Activated naive CD4-positive, alpha-beta T cell treated with anti-CD3 and anti-CD28 coated beads for 36 hours (primary cell): ENCODE measurements at regions of chr16 and their contacts with region 1.

Region 1: GRCh38 chr16:68264128-68265077 is at the start of gene SLC7A6:
- DNase-seq: peak; percentile 88
- H3K4me3 Mint-ChIP-seq: peak within 1 kb of the TSS; percentile 85
- H3K27ac Mint-ChIP-seq: peak within 1 kb of the TSS; percentile 98
- H3K4me1 Mint-ChIP-seq: peaks cover 46% of the 10 kb centered on the region
- H3K27me3 Mint-ChIP-seq: no peaks in the 10 kb centered on the region
- total RNA-seq, gene SLC7A6: 79.4 to 83.4 TPM

Region 2: GRCh38 chr16:67781565-67781921 is 482.9 kb before region 1 on chr16:
- CTCF ChIA-PET with region 1: no interaction called
- intact Hi-C with region 1: no loop called
- DNase-seq: peak; percentile 54
- H3K4me3 Mint-ChIP-seq: no peak overlapping the region
- H3K27ac Mint-ChIP-seq: peak overlapping the region; percentile 67
- H3K4me1 Mint-ChIP-seq: peaks cover 32% of the 10 kb centered on the region
- H3K27me3 Mint-ChIP-seq: no peaks in the 10 kb centered on the region

Region 3: DNA sequence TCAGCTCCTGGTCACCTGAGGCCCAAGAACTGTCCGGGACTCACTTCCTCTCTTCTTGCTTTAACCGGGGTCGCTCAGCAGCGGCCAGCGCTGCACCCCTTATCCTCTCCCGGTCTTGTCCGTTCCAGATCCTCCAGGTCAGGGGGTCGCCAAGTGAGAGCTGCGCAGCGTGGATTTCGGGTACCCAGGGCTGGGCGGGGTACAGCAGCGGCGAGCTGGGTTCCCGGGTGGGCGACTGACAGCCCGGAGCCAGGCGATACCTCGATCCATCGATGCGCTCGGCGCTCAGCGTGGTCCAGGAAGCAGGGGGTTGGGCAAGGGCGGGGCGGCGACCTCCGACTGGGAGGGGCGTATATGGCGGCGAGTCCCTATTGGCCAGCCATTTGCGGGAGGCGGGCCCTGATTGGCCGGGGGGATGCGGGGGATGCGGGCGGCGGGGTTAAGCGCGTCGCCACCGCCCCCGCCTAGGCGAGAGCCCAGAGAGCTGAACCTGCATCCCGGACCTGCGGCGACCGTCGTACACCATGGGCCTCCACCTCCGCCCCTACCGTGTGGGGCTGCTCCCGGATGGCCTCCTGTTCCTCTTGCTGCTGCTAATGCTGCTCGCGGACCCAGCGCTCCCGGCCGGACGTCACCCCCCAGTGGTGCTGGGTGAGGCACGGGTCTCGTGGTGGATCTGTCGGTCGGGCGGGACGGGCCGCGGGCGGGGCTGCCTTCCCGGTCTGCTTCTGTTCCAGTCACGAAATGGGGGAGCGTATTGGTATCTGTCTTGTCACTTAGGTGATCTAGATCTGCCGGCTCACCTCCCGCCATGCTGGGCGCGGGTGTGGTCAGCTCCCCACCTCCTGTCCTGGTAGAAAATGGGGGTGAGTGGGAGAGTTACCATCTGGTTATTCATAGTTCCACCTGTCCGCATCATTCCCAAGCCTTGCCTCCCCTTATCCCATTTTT is 19.2 kb before region 1 on chr16 and contains the start of gene PLA2G15:
- CTCF ChIA-PET with region 1: interaction called, 39 read pairs
- intact Hi-C with region 1: loop called (anchors 2 kb)
- DNase-seq: peak; percentile 97
- H3K4me3 Mint-ChIP-seq: peak within 1 kb of the TSS; percentile 90
- H3K27ac Mint-ChIP-seq: no peak within 1 kb of the TSS
- H3K4me1 Mint-ChIP-seq: peaks cover 20% of the 10 kb centered on the region
- H3K27me3 Mint-ChIP-seq: no peaks in the 10 kb centered on the region
- total RNA-seq, gene PLA2G15: 4.2 to 5.4 TPM

Region 4: DNA sequence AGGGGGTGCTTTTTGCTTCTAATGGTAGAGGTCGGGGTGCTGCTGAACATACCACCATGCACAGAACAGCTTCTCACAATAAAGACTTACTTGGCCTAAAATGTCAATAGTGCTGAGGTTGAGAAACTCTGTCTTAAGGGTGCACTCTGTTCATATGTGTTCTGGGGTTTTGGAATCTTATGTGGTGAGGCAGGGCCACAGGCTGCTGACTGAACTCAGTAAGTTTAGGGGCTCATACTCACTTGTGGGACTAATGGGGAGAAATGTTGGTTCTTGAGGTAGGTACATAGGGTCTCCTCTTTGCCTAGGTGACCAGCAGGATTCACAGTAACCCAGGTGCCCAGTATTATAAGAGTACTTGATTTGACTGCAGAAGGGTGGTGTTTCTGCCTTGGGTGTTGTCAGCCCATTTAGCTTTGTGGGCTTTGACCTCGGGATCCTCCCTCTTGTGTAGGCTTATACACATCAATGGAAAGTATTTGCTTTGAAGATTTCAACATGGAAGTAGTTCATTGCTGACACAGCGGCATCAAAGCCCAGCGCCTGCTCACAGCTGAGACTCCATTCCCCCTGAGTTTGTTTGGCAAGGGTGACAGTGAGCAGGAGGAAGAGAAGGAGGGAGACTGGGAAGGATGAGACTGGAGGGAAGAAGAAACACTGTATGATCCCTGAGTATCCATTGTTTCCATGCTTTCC is 17.1 kb after region 1 on chr16:
- CTCF ChIA-PET with region 1: interaction called, 181 read pairs
- intact Hi-C with region 1: no loop called
- DNase-seq: peak; percentile 43
- H3K4me3 Mint-ChIP-seq: no peak overlapping the region
- H3K27ac Mint-ChIP-seq: peak overlapping the region; percentile 92
- H3K4me1 Mint-ChIP-seq: peaks cover 74% of the 10 kb centered on the region
- H3K27me3 Mint-ChIP-seq: no peaks in the 10 kb centered on the region

Region 5: DNA sequence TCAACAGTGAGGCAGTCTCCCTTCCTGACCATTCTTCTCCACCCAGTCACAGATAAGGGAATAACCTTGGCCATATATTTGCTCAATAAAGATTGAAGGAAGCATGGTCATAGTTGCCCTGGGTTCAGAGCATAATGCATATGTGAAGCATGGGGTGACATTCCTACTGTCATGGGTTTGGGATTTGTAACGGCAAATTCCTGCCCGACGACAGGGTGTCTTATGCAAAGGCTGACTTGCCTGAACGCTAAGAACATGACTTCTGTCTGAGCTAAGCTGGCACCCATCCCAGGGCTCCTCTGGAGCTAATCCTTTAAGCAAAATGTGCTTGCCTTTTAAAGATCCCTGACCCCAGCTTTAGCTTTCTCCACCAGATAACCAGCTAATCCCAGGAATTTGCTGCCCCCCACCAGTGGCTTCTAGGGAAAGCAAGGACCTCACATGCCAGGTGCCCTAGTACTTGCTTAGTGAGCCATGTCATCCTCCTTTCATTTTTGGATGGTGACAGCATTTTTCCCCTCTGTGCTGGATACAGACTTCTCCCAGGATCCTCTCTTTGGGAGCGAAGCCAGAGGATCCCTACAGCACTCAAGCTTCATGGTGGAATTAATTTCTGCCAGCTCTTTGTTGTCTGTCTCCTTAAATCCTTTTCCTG is 34.6 kb after region 1 on chr16:
- CTCF ChIA-PET with region 1: interaction called, 74 read pairs
- intact Hi-C with region 1: no loop called
- DNase-seq: no peak
- H3K4me3 Mint-ChIP-seq: no peak overlapping the region
- H3K27ac Mint-ChIP-seq: peak overlapping the region; percentile 65
- H3K4me1 Mint-ChIP-seq: peaks cover 21% of the 10 kb centered on the region
- H3K27me3 Mint-ChIP-seq: no peaks in the 10 kb centered on the region

Region 6: DNA sequence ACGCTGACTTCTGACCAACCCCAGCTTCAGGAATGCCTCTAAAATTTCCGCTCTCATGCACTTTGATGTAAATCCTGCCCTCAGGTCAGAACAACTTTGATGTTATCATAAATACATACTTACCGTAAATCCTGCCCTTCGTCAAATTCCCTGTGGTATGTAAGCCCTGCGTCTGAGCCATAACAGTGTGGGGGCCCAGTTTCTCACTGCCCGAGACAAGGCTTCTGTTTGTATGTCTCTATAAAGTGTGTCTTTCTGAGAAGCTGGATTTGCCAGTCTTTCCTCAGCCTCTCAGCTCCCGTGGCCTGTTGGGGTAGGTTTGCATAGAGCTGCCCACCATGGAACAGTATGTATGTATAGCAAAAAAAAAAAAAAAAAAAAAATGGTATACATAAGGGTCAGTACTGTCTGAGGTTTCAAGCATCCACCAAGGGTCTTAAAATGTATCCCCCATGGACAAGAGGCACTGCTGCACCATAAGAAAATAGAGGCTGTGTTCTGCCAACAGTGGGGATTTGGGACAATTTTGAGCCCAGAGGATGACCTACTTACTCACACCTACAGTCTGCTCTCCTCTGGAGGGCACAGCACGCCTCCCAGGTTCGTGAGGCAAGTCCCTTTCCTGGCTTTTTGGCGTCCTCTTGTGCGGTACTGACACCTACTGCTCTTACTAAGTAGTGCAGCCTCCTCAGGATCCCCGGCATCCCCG is 63.9 kb after region 1 on chr16:
- CTCF ChIA-PET with region 1: interaction called, 459 read pairs
- intact Hi-C with region 1: loop called (anchors 1 kb)
- DNase-seq: peak; percentile 89
- H3K4me3 Mint-ChIP-seq: no peak overlapping the region
- H3K27ac Mint-ChIP-seq: no peak overlapping the region
- H3K4me1 Mint-ChIP-seq: peaks cover 25% of the 10 kb centered on the region
- H3K27me3 Mint-ChIP-seq: no peaks in the 10 kb centered on the region

Region 7: GRCh38 chr16:68367030-68367429 is 102.6 kb after region 1 on chr16:
- CTCF ChIA-PET with region 1: interaction called, 10 read pairs
- intact Hi-C with region 1: no loop called
- DNase-seq: peak; percentile 72
- H3K4me3 Mint-ChIP-seq: no peak overlapping the region
- H3K27ac Mint-ChIP-seq: no peak overlapping the region
- H3K4me1 Mint-ChIP-seq: peaks cover 39% of the 10 kb centered on the region
- H3K27me3 Mint-ChIP-seq: peaks cover 3% of the 10 kb centered on the region

Region 8: DNA sequence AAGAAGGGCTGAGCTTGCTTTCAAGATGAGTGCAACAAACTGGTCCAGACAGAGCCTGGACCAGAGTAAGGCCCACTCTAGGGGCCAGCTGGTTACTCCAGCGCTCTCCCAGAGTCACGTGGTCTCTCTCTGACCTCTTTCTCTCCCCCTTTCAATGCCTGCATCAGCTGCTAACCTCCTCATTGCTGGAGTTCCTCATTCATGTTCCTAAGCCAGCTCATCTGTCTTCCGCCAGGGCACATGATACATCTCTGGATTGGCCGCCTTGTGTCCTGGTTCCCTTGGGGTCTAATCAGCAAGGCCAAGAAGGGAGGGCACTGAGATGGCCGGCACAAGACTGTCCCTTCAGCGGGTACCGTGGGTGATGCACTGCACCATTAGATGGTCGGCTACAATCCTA is 247.8 kb after region 1 on chr16:
- CTCF ChIA-PET with region 1: interaction called, 11 read pairs
- intact Hi-C with region 1: loop called (anchors 1 kb)
- DNase-seq: no peak
- H3K4me3 Mint-ChIP-seq: no peak overlapping the region
- H3K27ac Mint-ChIP-seq: no peak overlapping the region
- H3K4me1 Mint-ChIP-seq: peaks cover 2% of the 10 kb centered on the region
- H3K27me3 Mint-ChIP-seq: no peaks in the 10 kb centered on the region